WTC11 (cell line): ENCODE measurements at regions of chr6 and their contacts with region 1.

Region 1: DNA sequence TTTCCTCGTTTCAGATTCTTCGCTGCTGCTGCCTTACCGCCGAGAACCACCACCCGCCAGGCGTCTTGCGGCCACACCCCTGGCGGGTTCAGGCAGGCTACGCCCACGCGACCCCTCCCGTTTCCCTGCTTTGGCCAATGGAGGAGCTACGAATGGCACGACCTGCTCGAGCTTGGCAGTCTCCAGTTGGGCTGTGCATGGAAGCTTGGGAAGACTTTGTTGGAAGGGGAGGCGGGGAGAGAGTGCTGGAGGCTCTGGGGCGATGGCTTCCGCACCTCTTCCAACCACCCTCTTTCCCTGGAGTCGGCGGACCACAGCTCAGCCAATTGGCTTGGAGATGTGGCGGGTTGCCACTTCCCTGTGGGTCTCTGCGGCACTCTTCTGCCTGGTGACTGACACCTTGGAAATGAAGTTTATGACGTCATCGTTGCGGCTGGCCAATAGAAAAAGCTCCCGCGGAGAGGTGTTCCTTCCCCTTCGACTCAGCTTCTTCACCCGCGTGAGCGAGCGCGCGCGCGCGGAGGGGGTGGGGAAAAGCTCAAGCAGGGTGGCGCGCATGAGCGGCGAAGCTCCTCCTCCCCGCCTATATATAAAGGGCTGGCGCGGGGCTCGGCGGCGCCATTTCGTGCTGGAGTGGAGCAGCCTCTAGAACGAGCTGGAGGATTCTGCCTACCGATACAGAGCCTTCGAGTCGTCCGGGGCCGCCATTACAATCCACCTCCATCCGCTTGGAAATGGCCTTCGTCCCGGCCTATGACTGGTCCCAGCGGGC is 3.4 kb downstream of the BRD2 start:
- DNase-seq: peak; percentile 99
- ATAC-seq: peak; percentile 56
- H3K4me3 Mint-ChIP-seq: peak overlapping the region; percentile 98
- H3K27ac Mint-ChIP-seq: peak overlapping the region; percentile 100
- H3K4me1 Mint-ChIP-seq: peaks cover 32% of the 10 kb centered on the region
- H3K27me3 Mint-ChIP-seq: peaks cover 4% of the 10 kb centered on the region; the same call in 1 of the 2 replicates
- CTCF ChIP-seq: no peak

Region 2: DNA sequence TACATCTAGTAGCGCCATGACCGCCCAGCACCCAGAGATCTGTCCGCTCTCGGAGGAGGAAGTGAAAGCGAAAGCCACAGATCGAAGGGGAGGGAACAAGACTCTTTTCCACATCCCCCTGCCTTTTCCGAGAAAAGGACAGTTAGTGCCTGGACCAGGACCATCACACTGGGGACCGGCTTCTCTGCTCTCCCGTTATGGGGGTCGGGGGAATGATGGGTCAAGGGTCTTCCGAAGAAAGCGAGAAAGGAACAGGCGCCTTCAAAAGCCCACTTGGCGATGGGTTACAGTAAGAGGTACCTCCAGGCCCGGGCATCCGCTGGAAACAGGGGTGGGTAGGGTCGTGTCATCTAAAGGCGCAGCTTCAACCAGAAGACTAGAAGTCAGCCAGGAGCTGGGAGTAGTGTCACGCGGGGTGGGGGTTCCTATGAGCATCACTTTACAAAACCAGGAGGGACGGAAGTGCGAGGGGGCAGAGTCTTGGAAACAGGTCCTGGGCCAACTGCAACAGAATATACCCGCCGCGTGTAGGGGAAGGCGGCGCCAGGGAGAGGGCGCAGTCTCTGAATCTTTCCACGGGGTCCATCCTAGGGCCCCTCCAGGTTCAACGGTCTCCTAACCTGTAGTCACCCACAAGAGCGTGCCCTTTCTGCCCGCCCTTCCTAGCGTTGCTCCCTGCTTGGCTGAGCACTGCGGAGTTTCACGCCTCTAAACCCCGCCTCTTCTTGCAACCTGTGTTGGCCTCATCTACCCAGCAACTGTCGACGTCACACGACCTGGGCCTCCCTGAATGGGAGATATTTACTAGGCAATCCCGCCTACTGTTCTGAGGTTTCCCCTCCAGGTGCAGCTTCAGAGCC is 127.6 kb before region 1 on chr6 and contains the start of gene PSMB8:
- CTCF ChIA-PET with region 1: interaction called, 28 read pairs
- POLR2A ChIA-PET with region 1: interaction called, 16 read pairs
- DNase-seq: peak; percentile 96
- ATAC-seq: peak; percentile 93
- H3K4me3 Mint-ChIP-seq: peak within 1 kb of the TSS; percentile 95
- H3K27ac Mint-ChIP-seq: peak within 1 kb of the TSS; percentile 78
- H3K4me1 Mint-ChIP-seq: peaks cover 17% of the 10 kb centered on the region
- H3K27me3 Mint-ChIP-seq: peaks cover 94% of the 10 kb centered on the region
- CTCF ChIP-seq: no peak
- total RNA-seq, gene PSMB8: 13.8 to 22.0 TPM (median 19.4 TPM) in 3 replicates

Region 3: GRCh38 chr6:32894080-32895005 is 77.4 kb before region 1 on chr6:
- CTCF ChIA-PET with region 1: interaction called, 5 read pairs
- POLR2A ChIA-PET with region 1: interaction called, 33 read pairs
- DNase-seq: peak; percentile 96
- ATAC-seq: peak; percentile 98
- H3K4me3 Mint-ChIP-seq: peak overlapping the region; percentile 98
- H3K27ac Mint-ChIP-seq: peak overlapping the region; percentile 99
- H3K4me1 Mint-ChIP-seq: peaks cover 13% of the 10 kb centered on the region
- H3K27me3 Mint-ChIP-seq: peaks cover 3% of the 10 kb centered on the region; the same call in 1 of the 2 replicates
- CTCF ChIP-seq: no peak

Region 4: GRCh38 chr6:33118525-33119123 is 146.9 kb after region 1 on chr6:
- CTCF ChIA-PET with region 1: interaction called, 3 read pairs
- POLR2A ChIA-PET with region 1: interaction called, 26 read pairs
- DNase-seq: no peak
- ATAC-seq: no peak
- H3K4me3 Mint-ChIP-seq: peak overlapping the region; percentile 98
- H3K27ac Mint-ChIP-seq: peak overlapping the region; percentile 100
- H3K4me1 Mint-ChIP-seq: peaks cover 76% of the 10 kb centered on the region
- H3K27me3 Mint-ChIP-seq: peaks cover 2% of the 10 kb centered on the region; the same call in 1 of the 2 replicates
- CTCF ChIP-seq: peak; percentile 89